ENCODE measurements at regions of chr4 and their contacts with region 1.

Region 1: GRCh38 chr4:184762100-184762499 is 28.2 kb upstream of the CENPU start:
- DNase-seq: peak; percentile 55
- ATAC-seq: peak; percentile 99
- H3K4me3 Mint-ChIP-seq: peak overlapping the region; percentile 20
- H3K27ac Mint-ChIP-seq: peak overlapping the region; percentile 89
- H3K4me1 Mint-ChIP-seq: peaks cover 22% of the 10 kb centered on the region
- H3K27me3 Mint-ChIP-seq: no peaks in the 10 kb centered on the region

Region 2: DNA sequence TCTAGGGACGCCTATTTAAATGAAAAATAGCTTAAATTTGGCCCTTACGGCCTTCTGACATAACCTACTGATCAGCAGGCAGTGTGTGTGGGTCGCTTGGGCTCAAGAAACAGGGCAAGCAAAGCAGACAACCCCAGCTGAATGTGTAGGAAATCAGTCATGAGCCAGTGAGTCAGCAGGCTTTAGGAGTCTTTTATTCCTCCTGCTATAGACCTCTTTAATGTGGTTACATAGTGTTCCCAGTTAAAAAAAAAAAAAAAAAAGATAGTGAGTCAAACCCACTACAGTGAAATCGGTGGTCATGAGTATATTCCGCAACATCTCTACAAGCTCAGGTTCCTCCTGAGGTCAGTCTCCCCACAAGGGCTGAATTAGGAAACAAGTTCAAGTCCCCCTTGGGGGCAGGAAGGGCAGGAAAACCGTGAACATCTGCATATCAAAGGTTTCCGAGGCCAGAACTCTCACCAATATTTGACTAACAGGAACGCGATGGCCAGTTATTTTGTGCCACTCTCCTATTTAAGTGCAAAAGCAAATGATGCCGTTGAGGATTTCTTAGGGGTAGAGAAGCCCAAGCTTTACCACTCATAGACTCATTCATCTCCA is 31.0 kb after region 1 on chr4:
- CTCF ChIA-PET with region 1: no interaction called
- POLR2A ChIA-PET with region 1: no interaction called
- intact Hi-C with region 1: loop called (anchors 2 kb)
- DNase-seq: peak; percentile 62
- ATAC-seq: peak; percentile 97
- H3K4me3 Mint-ChIP-seq: no peak overlapping the region
- H3K27ac Mint-ChIP-seq: no peak overlapping the region
- H3K4me1 Mint-ChIP-seq: peaks cover 29% of the 10 kb centered on the region
- H3K27me3 Mint-ChIP-seq: no peaks in the 10 kb centered on the region

Region 3: GRCh38 chr4:184950926-184951325 is 188.8 kb after region 1 on chr4:
- CTCF ChIA-PET with region 1: no interaction called
- POLR2A ChIA-PET with region 1: no interaction called
- intact Hi-C with region 1: no loop called
- DNase-seq: no peak
- ATAC-seq: no peak
- H3K4me3 Mint-ChIP-seq: no peak overlapping the region
- H3K27ac Mint-ChIP-seq: no peak overlapping the region
- H3K4me1 Mint-ChIP-seq: no peaks in the 10 kb centered on the region
- H3K27me3 Mint-ChIP-seq: peaks cover 31% of the 10 kb centered on the region

Region 4: DNA sequence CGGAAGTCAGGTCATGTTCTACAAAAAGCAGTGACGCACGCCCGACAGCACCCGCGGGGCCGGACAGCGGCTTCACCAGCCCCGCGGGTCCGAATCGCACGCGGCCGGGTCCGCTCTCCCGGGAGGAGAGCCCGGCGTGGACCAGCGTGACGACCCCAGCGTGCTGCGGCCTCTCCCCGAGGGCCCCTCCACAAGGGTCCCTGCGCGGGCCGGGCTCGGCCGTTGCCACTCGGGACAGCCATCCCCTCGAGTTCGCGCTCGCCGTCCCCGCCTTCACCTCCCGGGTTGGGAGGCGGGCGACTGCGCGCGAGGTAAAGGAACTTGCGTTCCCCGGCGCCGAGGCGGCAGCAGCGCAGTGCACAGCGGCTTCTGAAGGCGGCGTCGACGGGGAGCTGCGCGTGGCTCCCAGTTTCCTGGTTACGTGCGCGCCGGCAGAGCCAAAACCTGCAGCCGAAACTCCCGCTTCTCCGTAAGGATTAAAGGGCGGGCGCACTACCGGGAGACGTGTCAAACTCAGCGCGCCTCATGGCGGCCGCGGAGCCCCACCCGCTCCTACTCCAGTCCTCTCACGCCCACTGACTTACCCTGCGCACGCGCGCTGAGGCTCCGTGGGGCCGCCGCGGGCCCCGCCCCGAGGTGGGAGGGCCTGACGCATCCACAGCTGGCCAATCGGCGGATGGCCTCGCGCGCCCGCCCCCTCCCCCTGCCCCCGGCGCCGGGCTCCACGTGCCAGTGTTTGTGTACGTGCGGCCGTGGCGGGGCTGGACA is 634.0 kb after region 1 on chr4:
- CTCF ChIA-PET with region 1: no interaction called
- POLR2A ChIA-PET with region 1: no interaction called
- intact Hi-C with region 1: no loop called
- DNase-seq: peak; percentile 98
- ATAC-seq: peak; percentile 85
- H3K4me3 Mint-ChIP-seq: peak overlapping the region; percentile 94
- H3K27ac Mint-ChIP-seq: peak overlapping the region; percentile 97
- H3K4me1 Mint-ChIP-seq: peaks cover 37% of the 10 kb centered on the region
- H3K27me3 Mint-ChIP-seq: no peaks in the 10 kb centered on the region